ENCODE measurements at regions of chr11 and their contacts with region 1.

Region 1: DNA sequence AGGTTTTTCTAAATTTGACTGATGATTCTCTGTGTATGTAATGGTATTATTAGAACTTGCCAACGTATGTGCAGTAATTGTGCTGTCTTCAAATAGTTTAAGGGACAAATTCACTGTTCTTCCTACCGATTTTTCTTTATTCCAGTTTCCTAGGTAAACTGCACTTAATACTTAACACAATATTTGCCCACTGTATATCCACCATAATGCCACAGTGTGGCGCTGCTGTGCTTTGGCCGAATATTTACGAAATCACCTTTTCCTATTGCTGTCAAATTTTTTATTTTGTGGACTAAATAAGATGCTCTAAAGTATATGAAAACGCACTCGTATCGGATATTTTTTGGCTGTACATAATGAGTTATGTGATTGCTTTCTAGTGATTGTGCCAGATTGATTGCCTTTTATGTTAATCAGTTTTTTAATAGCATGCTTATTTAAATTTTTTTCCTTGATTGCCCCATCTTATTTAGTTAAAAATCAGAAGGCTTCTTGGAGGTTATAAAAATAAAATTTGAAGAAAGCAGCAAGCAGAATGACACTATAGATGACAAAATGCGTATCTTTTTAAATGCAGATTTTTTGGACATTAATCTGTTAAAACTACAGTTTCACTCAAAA is 10.5 kb downstream of the AASDHPPT start:
- DNase-seq: no peak
- CTCF ChIP-seq: peak; percentile 92

Region 2: DNA sequence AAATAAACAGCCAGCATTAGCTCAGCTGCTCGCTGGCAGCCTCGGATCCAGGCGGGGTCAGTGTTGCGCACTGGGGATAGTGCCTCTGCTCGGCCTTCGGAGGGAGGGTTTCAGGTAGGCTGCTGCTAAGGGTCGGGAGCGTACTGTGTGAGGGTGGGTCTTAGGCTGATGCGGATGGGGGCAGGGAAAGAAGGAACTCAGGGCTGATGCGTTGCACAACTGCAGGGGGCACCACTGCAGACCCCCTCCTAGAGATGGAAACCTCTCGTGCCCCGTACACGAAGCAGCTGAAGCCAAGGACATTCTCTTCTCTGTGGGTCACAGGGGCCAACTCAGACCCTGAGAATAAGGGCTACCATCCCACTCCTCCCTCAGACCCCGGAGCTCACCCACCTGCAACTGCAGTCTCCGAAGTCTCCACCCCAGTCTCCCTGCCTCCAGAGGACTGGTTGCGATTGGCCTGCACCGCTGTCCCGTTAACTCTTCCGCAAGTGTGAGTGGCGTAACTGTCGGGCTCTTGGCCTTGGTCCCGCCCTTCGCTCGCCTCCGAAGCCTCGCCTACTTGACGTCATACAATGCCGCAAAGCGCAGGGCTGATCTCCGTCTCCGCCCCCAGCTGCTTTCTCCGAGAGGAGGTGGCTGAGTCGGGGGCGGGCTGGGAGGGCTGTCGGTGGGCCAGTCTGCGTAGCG is 10.9 kb before region 1 on chr11 and contains the start of gene KBTBD3:
- CTCF ChIA-PET with region 1: interaction called, 26 read pairs
- POLR2A ChIA-PET with region 1: interaction called, 4 read pairs
- DNase-seq: peak; percentile 93
- CTCF ChIP-seq: peak; percentile 37

Region 3: DNA sequence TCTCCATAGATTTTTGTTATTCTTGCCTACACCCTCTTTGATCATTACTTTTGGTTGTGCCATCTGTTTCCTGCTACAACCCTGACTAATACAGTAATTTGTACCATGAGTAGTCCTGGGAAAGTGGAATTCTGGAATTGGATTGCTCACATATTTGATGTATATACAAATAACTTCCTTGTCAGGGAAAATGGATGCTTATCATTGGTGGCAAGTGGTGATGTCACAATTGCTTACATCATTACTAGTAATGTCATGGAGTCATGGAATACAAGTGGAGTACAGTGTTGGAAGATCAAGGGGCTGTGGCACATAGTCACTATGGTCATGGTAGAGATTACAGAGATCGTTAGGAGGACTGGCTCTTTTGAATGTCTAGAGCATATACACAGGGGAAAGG is 13.9 kb after region 1 on chr11:
- CTCF ChIA-PET with region 1: interaction called, 12 read pairs
- POLR2A ChIA-PET with region 1: no interaction called
- DNase-seq: no peak
- CTCF ChIP-seq: no peak

Measured in GM10248 (cell line).